ENCODE measurements at regions of chr7 and their contacts with region 1.

Region 1: GRCh38 chr7:121395961-121396757 is at the start of gene FAM3C:
- ATAC-seq: peak; percentile 94 to 98 (median 96)
- H3K4me3 ChIP-seq: peak within 1 kb of the TSS; percentile 73 to 99 (median 88)
- H3K27ac ChIP-seq: peak within 1 kb of the TSS; percentile 67 to 69
- H3K4me1 ChIP-seq: peaks cover 0 to 7% of the 10 kb centered on the region in 2 donors
- total RNA-seq, gene FAM3C: 29.8 to 136 (median 35.9) TPM

Region 2: GRCh38 chr7:120395526-120396019 is 1000.6 kb before region 1 on chr7:
- in situ Hi-C with region 1: no loop called
- ATAC-seq: peak in 4 of 8 experiments; percentile 26 to 87 (median 64)
- H3K4me3 ChIP-seq: no peak overlapping the region
- H3K27ac ChIP-seq: no peak overlapping the region
- H3K4me1 ChIP-seq: no peaks in the 10 kb centered on the region

Region 3: DNA sequence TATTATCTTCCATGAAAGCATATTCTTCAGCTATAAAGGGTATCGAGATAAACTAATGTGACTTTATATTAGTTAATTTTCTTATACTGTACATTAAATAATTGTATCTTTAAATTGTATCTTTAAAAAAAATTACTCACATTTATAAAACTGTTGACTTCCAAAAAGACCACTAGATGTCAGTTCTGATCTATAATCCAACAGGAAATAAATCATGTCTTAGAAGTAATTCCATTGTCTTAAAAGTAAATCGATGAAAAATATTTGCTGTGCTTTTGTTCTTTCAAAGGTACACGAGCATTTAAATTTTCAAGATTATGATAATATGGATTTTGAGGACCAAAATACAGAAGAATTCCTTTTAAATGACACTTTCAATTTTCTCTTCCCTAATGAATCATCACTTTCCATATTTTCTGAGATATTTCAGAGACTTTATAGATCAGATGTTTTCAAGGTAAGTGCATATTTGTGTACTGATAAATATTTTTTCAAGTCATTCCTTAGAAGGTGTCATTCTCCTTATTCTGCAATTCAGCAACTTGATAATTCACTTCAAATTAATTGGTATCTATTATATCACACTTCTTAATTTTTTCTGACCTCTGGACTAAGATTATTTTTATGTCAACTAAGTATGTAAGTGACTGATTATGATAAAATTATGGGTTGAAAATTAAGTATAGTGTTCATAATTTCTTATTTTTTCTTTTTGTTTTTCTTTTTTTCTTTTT is 269.2 kb before region 1 on chr7:
- in situ Hi-C with region 1: no loop called
- ATAC-seq: no peak
- H3K4me3 ChIP-seq: no peak overlapping the region
- H3K27ac ChIP-seq: no peak overlapping the region
- H3K4me1 ChIP-seq: no peaks in the 10 kb centered on the region

Region 4: DNA sequence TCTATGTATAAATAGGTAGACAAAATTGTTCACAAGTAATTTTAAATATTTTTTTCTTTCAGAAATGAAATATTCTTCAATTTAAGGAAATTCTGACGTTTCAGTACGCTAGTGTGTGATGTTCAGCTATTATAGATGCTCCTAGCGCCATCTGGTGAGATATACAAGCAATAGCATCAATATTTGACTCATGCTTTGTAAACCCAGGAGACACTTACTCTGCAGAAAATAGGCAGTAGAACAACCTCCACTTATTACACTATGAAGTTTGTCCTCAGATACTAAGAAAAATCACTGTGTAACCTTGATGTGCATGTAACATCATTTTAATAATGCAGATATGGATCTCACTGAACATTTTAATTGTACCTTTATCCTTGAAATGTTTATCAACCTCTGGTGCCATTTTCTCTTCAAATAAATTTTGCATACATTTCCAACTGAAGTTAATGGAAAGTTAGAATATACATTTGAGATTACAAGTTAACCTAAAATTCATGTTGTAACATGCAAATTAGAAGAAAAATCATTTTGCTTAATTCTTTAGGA is 151.5 kb after region 1 on chr7:
- in situ Hi-C with region 1: loop called in 1 of 9 experiments (anchors 25 kb)
- ATAC-seq: peak in 7 of 8 experiments; percentile 65 to 90 (median 78)
- H3K4me3 ChIP-seq: no peak overlapping the region
- H3K27ac ChIP-seq: no peak overlapping the region
- H3K4me1 ChIP-seq: no peaks in the 10 kb centered on the region

Measured in motor neuron (in vitro differentiated cells).